ENCODE measurements at regions of chr12 and their contacts with region 1.

Region 1: DNA sequence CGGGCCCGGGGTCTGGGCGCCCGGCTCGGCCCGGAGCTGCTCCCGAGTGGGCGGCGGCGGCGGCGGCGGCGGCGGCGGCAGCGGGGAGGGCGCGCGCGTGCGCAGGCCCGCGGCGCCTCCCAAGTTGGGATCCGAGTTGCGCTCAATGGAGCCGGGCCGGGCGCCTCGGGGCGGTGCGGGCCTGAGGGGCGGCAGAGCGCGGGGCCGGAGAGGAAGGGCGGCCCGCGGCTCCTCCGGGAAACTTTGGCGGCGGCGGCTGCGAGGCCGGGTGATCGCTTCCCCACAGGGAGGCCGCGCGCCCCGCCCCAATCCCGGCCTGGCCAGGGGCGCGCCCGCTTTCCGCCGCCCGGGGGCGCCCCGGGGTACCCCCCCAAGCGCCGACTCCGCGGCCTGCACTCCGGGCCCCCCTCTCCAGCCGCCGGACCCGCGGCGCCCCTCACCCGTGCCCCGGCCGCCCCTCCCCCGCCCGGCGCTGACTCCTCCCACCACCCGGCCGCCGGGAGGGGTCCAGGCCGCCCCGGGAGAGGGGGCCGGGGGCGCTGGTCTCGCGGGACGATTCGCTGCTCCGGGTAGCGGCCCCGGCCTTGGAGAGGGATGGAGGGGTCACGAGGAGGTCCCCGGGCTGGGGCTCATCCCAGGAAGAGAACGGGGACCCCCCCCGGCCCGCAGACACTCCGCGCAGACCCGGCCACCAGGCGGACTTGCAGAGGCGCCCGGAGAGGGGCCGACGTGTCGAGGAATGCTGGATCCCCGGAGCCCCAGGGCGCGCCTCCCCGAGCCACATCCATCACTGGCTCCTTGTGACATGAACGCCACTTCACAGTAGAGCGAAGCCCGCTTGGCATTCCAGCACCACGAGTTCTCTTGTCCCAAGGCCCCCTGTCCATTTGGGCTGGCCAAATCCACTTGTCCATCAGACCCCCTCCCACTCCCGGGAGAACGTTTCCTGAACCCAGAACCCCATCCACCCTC is at the start of gene RILPL1:
- DNase-seq: peak; percentile 56 to 79 (median 64)
- ATAC-seq: peak; percentile 18 to 81 (median 56)
- H3K4me3 ChIP-seq: peak within 1 kb of the TSS; percentile 63 to 98 (median 76)
- H3K27ac ChIP-seq: peak within 1 kb of the TSS; percentile 86 to 97 (median 94)
- H3K4me1 ChIP-seq: peaks cover 0 to 43% (median 29%) of the 10 kb centered on the region in 12 donors
- H3K27me3 ChIP-seq: peaks cover 0 to 8% (median 0%) of the 10 kb centered on the region in 9 donors
- CTCF ChIP-seq: peak in 10 of 12 donors; percentile 17 to 62 (median 46)
- POLR2A ChIP-seq: peak in 1 of 2 donors; percentile 30
- total RNA-seq, gene RILPL1: 64.1 to 119 (median 79.4) TPM

Region 2: DNA sequence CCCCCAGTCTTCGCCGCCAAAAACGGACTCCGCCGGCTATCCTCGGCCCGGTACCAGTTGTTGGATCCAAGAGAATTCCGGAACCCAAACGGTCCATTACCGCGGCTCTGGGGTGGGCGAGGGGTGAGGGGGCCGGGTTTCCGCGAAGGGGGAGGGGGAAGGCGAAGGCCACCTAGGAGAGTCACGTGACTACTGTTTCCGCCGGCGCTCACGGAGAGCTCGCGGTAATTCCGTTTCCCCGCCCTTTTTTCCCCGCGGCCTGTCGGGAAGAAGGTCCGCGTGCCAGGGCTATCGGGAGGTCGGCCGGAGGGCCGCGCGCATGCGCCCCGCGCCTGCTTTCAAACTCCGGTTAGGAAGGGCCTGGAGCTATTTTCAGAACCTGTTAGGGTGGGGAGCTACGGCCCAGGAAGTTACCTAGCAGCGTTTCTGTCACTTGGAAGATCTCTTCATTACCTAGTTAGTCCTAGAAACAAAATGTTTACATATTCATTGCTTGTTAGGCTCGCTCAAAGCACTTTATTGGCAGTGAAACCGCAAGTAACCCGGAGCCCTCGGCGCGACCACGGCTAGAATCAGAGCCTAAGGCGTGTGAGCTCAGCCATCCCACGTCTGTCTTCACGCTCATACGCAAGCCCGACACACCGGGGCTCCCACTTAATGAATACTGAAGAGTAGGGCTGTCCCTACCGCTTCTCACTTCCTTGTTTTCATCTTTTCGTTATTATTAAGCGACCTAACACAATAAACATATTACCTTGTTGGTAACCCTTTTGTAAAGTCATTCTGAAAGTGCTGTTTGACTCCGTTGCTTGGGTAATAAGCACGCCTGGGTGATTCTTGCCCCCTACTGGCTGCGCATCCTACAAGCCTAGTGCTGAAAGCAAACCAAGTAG is 168.7 kb before region 1 on chr12:
- intact Hi-C with region 1: loop called in 1 of 10 experiments (anchors 5 kb)
- DNase-seq: peak; percentile 99
- ATAC-seq: peak; percentile 90 to 96 (median 94)
- H3K4me3 ChIP-seq: peak overlapping the region; percentile 67 to 98 (median 87)
- H3K27ac ChIP-seq: peak overlapping the region; percentile 82 to 99 (median 95)
- H3K4me1 ChIP-seq: peaks cover 4 to 38% (median 21%) of the 10 kb centered on the region in 12 donors
- H3K27me3 ChIP-seq: no peaks in the 10 kb centered on the region
- CTCF ChIP-seq: peak; percentile 52 to 96 (median 73)
- POLR2A ChIP-seq: peak in 1 of 2 donors; percentile 76

Region 3: DNA sequence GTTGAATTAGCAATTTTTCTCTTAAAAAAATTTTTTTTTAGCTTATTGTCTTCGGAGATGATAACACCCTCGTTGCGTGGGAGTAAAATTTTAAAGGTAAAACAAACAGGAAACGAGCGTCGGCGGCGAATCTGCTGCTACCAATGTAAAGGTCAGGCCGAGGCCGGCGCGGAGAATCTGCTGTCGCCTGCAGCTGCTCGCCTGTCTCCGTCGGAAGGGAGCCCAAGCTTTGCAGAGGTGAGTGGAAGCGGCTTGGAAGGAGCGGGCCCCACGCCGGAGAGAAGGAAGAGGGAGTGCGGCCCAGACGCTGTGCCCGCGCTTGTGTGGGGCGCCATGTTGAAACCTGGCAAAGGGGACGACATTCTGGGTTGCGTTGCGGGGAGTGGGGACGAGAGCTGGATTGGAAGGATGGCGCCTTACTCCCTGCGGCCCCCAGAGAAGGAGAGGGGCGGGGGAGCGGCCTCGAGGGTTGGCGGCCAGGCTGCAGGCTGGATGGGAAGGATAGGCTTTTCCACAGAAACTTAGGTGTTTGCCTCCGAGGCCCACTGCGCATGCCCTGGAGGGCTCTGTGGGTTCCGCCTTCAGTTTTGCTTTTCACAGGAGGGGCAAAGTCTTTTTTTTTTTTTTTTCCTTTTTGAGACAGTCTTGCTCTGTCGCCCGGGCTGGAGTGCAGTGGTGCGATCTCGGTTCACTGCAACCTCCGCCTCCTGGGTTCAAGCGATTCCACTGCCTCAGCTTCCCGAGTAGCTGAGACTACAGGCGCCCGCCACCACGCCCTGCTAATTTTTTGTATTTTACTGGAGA is 75.8 kb before region 1 on chr12 and contains the start of gene SNRNP35:
- intact Hi-C with region 1: loop called in 1 of 10 experiments (anchors 5 kb)
- DNase-seq: peak; percentile 81 to 91 (median 84)
- ATAC-seq: peak; percentile 85 to 91 (median 90)
- H3K4me3 ChIP-seq: peak within 1 kb of the TSS; percentile 63 to 93 (median 79)
- H3K27ac ChIP-seq: peak within 1 kb of the TSS; percentile 94 to 99 (median 98)
- H3K4me1 ChIP-seq: peaks cover 0 to 25% (median 12%) of the 10 kb centered on the region in 12 donors
- H3K27me3 ChIP-seq: no peaks in the 10 kb centered on the region
- CTCF ChIP-seq: peak in 1 of 12 donors; percentile 4
- POLR2A ChIP-seq: peak in 1 of 2 donors; percentile 43
- total RNA-seq, gene SNRNP35: 18.5 to 27.4 (median 20.0) TPM

Region 4: DNA sequence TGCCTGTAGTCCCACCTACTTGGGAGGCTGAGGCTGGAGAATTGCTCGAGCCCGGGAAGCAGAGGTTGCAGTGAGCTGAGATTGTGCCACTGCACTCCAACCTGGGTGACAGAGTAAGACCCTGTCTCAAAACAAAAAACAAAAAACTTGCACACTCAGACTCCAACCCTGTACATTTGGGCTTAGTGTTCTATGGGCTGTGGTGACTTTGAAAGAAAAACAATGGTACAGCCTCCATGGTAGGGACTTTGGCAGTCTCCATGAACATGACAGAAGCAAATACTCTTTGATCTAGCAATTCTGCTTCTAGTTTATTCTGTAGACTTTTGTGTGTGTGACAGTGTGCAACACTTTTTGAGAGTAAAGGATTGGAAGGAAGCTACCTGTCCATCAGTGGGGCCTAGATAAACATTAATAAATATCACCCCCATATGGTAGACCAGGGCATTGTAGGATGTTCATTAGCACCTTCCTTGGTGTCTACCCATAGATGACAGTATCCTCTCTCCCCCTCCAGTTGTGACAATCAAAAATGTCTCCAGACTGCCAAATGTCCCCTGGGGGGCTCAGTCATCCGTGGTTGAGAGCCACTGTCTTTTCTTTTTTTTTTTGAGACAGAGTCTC is 65.3 kb before region 1 on chr12:
- intact Hi-C with region 1: loop called in 4 of 10 experiments (anchors 5 kb)
- DNase-seq: no peak
- ATAC-seq: no peak
- H3K4me3 ChIP-seq: no peak overlapping the region
- H3K27ac ChIP-seq: no peak overlapping the region
- H3K4me1 ChIP-seq: peaks cover 0 to 52% (median 22%) of the 10 kb centered on the region in 12 donors
- H3K27me3 ChIP-seq: no peaks in the 10 kb centered on the region
- CTCF ChIP-seq: peak in 4 of 12 donors; percentile 9 to 21 (median 15)
- POLR2A ChIP-seq: no peak

Region 5: DNA sequence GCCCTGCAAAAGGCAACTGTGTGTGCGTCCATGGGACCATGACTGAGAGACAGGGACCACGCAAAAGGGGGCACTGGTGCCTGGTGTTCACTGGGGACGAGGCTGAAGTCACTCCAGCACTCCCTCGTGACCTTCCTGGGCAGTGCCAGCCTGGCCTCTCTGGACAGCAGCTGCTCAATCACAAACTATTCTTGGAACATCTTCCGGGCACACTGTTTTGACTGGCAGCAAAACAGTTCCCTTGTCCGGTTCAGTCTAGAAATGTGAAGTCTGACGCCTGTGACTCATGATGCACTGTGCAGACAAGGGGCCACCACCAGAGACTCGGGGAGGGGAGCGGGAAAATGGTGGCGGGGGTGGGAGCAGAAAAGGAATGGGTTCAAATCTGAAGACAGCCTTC is 55.2 kb before region 1 on chr12:
- intact Hi-C with region 1: loop called in 5 of 10 experiments (anchors 5 kb)
- DNase-seq: peak; percentile 73 to 88 (median 77)
- ATAC-seq: peak; percentile 86 to 90 (median 88)
- H3K4me3 ChIP-seq: peak overlapping the region in 1 of 12 donors; percentile 32
- H3K27ac ChIP-seq: peak overlapping the region; percentile 71 to 95 (median 86)
- H3K4me1 ChIP-seq: peaks cover 0 to 51% (median 23%) of the 10 kb centered on the region in 12 donors
- H3K27me3 ChIP-seq: no peaks in the 10 kb centered on the region
- CTCF ChIP-seq: no peak
- POLR2A ChIP-seq: no peak

Measured in heart left ventricle (tissue), 16 donors.